Heart right ventricle (tissue), 16 donors: ENCODE measurements at regions of chr10 and their contacts with region 1.

Region 1: DNA sequence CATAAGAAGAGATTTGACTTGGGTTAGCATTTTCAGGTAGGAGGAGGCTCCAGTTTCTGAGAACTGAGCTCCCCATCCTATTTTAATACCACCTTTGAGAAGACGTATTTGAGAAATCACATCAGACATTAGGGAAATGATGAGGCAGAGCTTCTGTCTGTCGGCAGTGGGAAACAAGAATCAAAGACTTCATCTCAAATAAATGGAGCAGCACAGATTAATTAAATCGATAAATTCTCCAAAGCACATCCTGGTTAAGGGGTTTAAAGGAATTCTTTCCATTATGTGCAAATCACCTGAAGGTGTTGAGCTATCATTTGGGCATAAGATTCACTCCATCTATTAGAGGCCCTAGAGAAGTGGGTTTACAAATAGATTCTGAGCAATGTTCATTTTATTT is 7.6 kb downstream of the ADARB2 start:
- DNase-seq: no peak
- ATAC-seq: no peak
- H3K4me3 ChIP-seq: no peak overlapping the region
- H3K27ac ChIP-seq: no peak overlapping the region
- H3K4me1 ChIP-seq: no peaks in the 10 kb centered on the region
- H3K27me3 ChIP-seq: peaks cover 0 to 74% (median 48%) of the 10 kb centered on the region in 7 donors
- CTCF ChIP-seq: no peak

Region 2: GRCh38 chr10:1643161-1643907 is 86.4 kb before region 1 on chr10:
- intact Hi-C with region 1: no loop called
- DNase-seq: no peak
- ATAC-seq: no peak
- H3K4me3 ChIP-seq: no peak overlapping the region
- H3K27ac ChIP-seq: no peak overlapping the region
- H3K4me1 ChIP-seq: no peaks in the 10 kb centered on the region
- H3K27me3 ChIP-seq: peaks cover 0 to 3% (median 0%) of the 10 kb centered on the region in 7 donors
- CTCF ChIP-seq: no peak

Region 3: DNA sequence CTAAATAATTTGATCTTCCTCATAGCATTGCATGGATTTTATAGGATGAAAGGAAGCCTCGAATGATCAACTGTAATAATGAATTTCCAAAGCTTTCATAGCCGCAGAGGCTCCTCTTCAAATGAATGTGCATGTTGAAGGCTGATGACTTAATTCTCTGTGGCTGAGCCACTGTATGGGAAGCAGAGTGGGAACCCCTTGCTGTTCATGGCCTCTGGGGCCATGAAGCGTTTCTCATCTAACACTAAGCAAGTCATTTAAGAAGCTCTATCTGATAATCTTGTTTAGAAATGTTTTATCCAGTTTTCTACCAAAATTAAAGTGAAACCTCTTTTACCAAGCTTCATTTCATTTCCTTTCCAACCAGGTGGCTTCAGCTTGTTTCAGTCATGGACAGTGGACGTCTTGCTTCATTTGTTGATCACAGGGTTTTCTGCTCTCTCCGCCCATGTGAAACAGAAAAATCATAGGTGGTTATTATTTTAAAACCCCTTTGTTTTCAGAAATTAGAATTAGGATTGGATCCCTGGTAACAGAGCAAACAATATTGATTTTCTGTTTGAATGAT is 17.9 kb after region 1 on chr10:
- intact Hi-C with region 1: loop called in 1 of 10 experiments (anchors 2 kb)
- DNase-seq: no peak
- ATAC-seq: no peak
- H3K4me3 ChIP-seq: no peak overlapping the region
- H3K27ac ChIP-seq: no peak overlapping the region
- H3K4me1 ChIP-seq: no peaks in the 10 kb centered on the region
- H3K27me3 ChIP-seq: peaks cover 0 to 32% (median 5%) of the 10 kb centered on the region in 7 donors
- CTCF ChIP-seq: no peak